CD4-positive, alpha-beta T cell (primary cell): ENCODE measurements at regions of chr12 and their contacts with region 1.

Region 1: DNA sequence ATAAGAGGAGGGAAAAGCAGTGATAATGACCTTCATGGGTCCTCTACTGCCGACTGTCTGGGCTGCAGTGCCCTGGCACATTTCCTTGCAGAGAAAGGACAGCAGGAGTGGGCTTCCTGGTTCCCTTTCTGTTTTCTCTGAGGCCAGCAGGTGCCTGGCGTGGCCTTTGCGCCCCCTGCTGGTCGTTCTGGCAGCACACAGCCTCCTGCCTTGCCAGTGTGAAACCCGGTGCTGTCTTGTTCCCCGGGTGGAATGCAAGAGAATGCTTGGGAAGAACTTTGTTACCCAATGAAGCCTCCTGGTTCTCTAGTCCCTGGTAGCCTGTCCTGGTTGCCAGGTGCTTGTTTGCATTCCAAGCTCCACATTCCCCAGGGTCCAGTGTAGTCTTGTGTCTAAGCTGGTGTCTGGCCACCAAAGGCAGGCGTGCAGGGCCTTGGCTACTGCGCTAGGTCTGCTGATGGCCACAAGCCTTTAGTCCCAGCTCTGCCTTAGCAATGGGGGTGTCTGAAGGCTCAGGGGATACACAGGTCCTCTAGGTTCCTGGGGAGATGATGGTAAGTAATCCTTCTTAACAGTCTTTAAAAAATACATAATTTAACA is 1392.4 kb upstream of the TMEM132C start:
- DNase-seq: peak; percentile 28 to 74 (median 42)
- ATAC-seq: no peak
- H3K4me3 ChIP-seq: no peak overlapping the region
- H3K4me3 Mint-ChIP-seq: no peak overlapping the region
- H3K27ac ChIP-seq: no peak overlapping the region
- H3K27ac Mint-ChIP-seq: no peak overlapping the region
- H3K4me1 ChIP-seq: peaks cover 4% of the 10 kb centered on the region
- H3K4me1 Mint-ChIP-seq: no peaks in the 10 kb centered on the region
- H3K27me3 ChIP-seq: no peaks in the 10 kb centered on the region
- H3K27me3 Mint-ChIP-seq: no peaks in the 10 kb centered on the region
- CTCF ChIP-seq: peak; percentile 71

Region 2: DNA sequence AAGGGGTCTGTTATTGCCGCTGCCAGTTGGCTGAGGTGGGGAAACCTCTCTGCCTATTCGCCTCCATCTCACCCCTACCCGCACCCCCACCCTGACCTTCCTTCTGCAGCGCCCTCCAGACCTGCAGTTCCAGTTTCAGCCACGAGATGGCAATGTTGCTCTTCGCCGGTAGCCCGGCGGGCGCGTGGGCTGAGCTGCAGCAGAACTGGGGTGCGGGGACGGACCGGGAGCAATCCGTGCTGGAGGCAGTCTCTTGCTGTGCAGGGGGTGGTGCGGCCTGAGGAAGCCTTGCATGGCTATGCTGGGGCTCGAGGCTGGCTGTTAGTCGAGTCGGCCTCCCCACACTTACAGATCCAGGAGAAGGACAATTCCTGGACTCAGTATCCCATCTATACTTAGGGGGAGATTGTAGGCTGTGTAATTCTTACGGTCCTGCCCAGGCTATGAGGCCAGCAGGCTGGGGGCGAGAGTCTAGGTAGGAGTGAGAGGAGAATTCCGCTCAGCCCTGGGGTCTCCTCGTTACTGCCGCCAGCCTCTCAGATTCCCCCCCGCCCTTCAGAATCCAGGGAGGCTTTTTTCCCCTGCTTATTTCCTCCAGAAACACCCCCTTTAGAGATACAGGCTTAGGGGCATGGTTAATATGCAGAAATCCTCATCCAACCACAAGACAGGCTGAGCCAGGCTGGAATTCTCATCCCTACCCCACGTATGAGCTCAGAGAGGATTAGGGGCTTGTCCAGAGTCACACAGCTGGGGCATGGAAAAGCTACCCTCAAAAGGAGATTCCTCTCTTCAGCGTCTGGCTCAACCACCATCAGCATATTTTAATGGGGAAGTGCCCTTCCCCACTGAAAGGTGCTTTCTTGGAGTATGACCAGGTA is 1691.1 kb before region 1 on chr12:
- CTCF ChIA-PET with region 1: interaction called, 3 read pairs
- POLR2A ChIA-PET with region 1: no interaction called
- intact Hi-C with region 1: loop called in 1 of 2 experiments (anchors 1 kb)
- DNase-seq: peak; percentile 49 to 85 (median 73)
- ATAC-seq: peak; percentile 67
- H3K4me3 ChIP-seq: no peak overlapping the region
- H3K4me3 Mint-ChIP-seq: no peak overlapping the region
- H3K27ac ChIP-seq: no peak overlapping the region
- H3K27ac Mint-ChIP-seq: no peak overlapping the region
- H3K4me1 ChIP-seq: peaks cover 10% of the 10 kb centered on the region
- H3K4me1 Mint-ChIP-seq: peaks cover 5% of the 10 kb centered on the region
- H3K27me3 ChIP-seq: peaks cover 35 to 54% of the 10 kb centered on the region in 2 experiments
- H3K27me3 Mint-ChIP-seq: peaks cover 72% of the 10 kb centered on the region
- CTCF ChIP-seq: peak; percentile 98

Region 3: DNA sequence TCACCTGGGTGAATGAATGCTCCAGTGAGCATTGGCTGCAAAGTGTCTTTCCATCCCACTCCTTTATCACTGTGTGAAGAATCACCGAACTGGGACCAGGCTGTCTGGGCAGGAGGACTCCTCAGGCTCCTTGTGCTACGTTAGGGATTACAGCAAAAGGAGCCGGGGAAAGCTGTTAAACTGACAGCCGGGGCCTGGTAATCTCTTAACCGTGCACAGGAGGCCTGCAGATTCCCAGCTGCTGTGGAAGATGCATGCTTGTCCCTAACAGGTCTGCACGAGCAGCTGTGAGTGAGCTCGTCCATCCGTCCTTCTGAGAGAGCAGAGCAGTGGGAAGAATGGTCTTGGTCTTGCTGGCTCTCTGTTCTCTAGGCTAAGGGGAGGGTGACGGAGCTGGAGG is 1577.8 kb before region 1 on chr12:
- CTCF ChIA-PET with region 1: no interaction called
- POLR2A ChIA-PET with region 1: no interaction called
- intact Hi-C with region 1: no loop called
- DNase-seq: no peak
- ATAC-seq: no peak
- H3K4me3 ChIP-seq: no peak overlapping the region
- H3K4me3 Mint-ChIP-seq: no peak overlapping the region
- H3K27ac ChIP-seq: no peak overlapping the region
- H3K27ac Mint-ChIP-seq: no peak overlapping the region
- H3K4me1 ChIP-seq: no peaks in the 10 kb centered on the region
- H3K4me1 Mint-ChIP-seq: no peaks in the 10 kb centered on the region
- H3K27me3 ChIP-seq: peaks cover 0 to 5% of the 10 kb centered on the region in 2 experiments
- H3K27me3 Mint-ChIP-seq: peaks cover 25% of the 10 kb centered on the region
- CTCF ChIP-seq: no peak

Region 4: DNA sequence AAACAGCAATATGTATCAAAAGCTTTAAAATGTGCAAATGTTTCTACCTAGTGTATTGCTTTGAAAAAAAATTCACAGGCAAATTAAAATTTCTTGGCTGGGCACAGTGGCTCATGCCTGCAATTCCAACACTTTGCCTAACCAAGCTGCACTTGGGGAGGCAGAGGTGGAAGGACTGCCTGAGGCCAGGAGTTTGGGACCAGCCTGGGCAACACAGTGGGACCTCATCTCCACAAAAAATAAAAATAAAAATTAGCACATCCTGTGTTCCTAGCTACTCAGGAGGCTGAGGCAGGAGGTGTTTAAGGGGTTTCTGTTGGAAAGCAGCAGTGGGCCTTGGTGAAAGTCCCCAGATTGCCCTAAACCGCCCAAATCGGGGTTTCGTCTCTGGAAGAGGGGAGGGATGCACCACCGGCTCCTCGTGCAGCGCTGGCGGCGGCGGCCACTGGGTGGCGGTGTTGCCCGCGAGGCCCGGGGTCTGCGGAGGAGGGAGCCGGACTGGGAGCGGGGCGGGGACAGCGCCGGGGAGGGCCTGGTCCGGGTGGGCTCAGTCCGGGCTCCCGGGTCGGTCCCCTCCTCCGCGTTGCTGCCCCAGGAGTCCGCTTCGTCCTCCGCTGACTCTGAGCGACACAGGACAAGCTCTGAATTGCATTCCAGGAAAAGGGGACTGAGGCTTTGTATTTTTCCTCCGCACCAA is 1543.7 kb before region 1 on chr12:
- CTCF ChIA-PET with region 1: no interaction called
- POLR2A ChIA-PET with region 1: no interaction called
- intact Hi-C with region 1: loop called (anchors 5 to 10 kb)
- DNase-seq: peak in 12 of 14 experiments; percentile 1 to 46 (median 13)
- ATAC-seq: peak; percentile 34
- H3K4me3 ChIP-seq: no peak overlapping the region
- H3K4me3 Mint-ChIP-seq: no peak overlapping the region
- H3K27ac ChIP-seq: no peak overlapping the region
- H3K27ac Mint-ChIP-seq: no peak overlapping the region
- H3K4me1 ChIP-seq: peaks cover 6% of the 10 kb centered on the region
- H3K4me1 Mint-ChIP-seq: no peaks in the 10 kb centered on the region
- H3K27me3 ChIP-seq: peaks cover 23% of the 10 kb centered on the region in 2 experiments
- H3K27me3 Mint-ChIP-seq: peaks cover 70% of the 10 kb centered on the region
- CTCF ChIP-seq: peak; percentile 41

Region 5: GRCh38 chr12:125533434-125534029 is 1341.0 kb before region 1 on chr12:
- CTCF ChIA-PET with region 1: no interaction called
- POLR2A ChIA-PET with region 1: no interaction called
- intact Hi-C with region 1: loop called (anchors 10 kb)
- DNase-seq: peak in 1 of 14 experiments; percentile 1
- ATAC-seq: no peak
- H3K4me3 ChIP-seq: no peak overlapping the region
- H3K4me3 Mint-ChIP-seq: no peak overlapping the region
- H3K27ac ChIP-seq: no peak overlapping the region
- H3K27ac Mint-ChIP-seq: no peak overlapping the region
- H3K4me1 ChIP-seq: no peaks in the 10 kb centered on the region
- H3K4me1 Mint-ChIP-seq: no peaks in the 10 kb centered on the region
- H3K27me3 ChIP-seq: peaks cover 4 to 6% of the 10 kb centered on the region in 2 experiments
- H3K27me3 Mint-ChIP-seq: peaks cover 37% of the 10 kb centered on the region
- CTCF ChIP-seq: no peak

Region 6: GRCh38 chr12:126069549-126070165 is 804.9 kb before region 1 on chr12:
- CTCF ChIA-PET with region 1: no interaction called
- POLR2A ChIA-PET with region 1: no interaction called
- intact Hi-C with region 1: loop called (anchors 2 to 5 kb)
- DNase-seq: peak in 8 of 14 experiments; percentile 0 to 40 (median 11)
- ATAC-seq: no peak
- H3K4me3 ChIP-seq: no peak overlapping the region
- H3K4me3 Mint-ChIP-seq: no peak overlapping the region
- H3K27ac ChIP-seq: no peak overlapping the region
- H3K27ac Mint-ChIP-seq: no peak overlapping the region
- H3K4me1 ChIP-seq: no peaks in the 10 kb centered on the region
- H3K4me1 Mint-ChIP-seq: no peaks in the 10 kb centered on the region
- H3K27me3 ChIP-seq: no peaks in the 10 kb centered on the region
- H3K27me3 Mint-ChIP-seq: no peaks in the 10 kb centered on the region
- CTCF ChIP-seq: no peak

Region 7: GRCh38 chr12:126636821-126637220 is 237.7 kb before region 1 on chr12:
- CTCF ChIA-PET with region 1: no interaction called
- POLR2A ChIA-PET with region 1: no interaction called
- intact Hi-C with region 1: no loop called
- DNase-seq: no peak
- ATAC-seq: no peak
- H3K4me3 ChIP-seq: no peak overlapping the region
- H3K4me3 Mint-ChIP-seq: no peak overlapping the region
- H3K27ac ChIP-seq: no peak overlapping the region
- H3K27ac Mint-ChIP-seq: no peak overlapping the region
- H3K4me1 ChIP-seq: no peaks in the 10 kb centered on the region
- H3K4me1 Mint-ChIP-seq: no peaks in the 10 kb centered on the region
- H3K27me3 ChIP-seq: no peaks in the 10 kb centered on the region
- H3K27me3 Mint-ChIP-seq: no peaks in the 10 kb centered on the region
- CTCF ChIP-seq: no peak

Region 8: DNA sequence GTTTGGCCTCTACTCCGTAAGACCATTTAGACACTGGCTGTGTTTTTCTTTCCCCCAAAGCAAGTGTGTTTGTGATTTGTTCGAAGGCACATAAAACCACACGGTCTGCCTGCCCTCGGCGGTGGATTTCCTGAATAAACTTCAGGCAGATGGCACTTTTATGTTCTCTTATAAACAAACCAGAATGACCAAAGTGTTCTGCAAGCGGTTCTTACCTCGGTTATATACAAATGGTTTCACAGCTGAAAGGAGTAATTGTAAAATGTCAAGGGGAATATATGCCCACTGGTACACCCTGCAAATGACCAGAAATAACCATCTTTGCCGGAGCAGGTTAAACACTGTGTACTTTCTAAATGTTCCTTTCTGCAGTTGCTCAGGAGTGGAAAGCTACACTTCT is 83.4 kb before region 1 on chr12:
- CTCF ChIA-PET with region 1: no interaction called
- POLR2A ChIA-PET with region 1: no interaction called
- intact Hi-C with region 1: no loop called
- DNase-seq: no peak
- ATAC-seq: no peak
- H3K4me3 ChIP-seq: no peak overlapping the region
- H3K4me3 Mint-ChIP-seq: no peak overlapping the region
- H3K27ac ChIP-seq: no peak overlapping the region
- H3K27ac Mint-ChIP-seq: no peak overlapping the region
- H3K4me1 ChIP-seq: no peaks in the 10 kb centered on the region
- H3K4me1 Mint-ChIP-seq: no peaks in the 10 kb centered on the region
- H3K27me3 ChIP-seq: no peaks in the 10 kb centered on the region
- H3K27me3 Mint-ChIP-seq: no peaks in the 10 kb centered on the region
- CTCF ChIP-seq: no peak